HEK293 (cell line): ENCODE measurements at regions of chr11 and their contacts with region 1.

Region 1: GRCh38 chr11:18526521-18527296 is at the start of gene TSG101:
- H3K4me3 ChIP-seq: peak within 1 kb of the TSS; percentile 94
- H3K27ac ChIP-seq: peak within 1 kb of the TSS; percentile 76
- H3K4me1 ChIP-seq: peaks cover 2% of the 10 kb centered on the region; the same call in 1 of the 2 replicates
- CTCF ChIP-seq: no peak

Region 2: GRCh38 chr11:18634140-18635032 is 107.7 kb after region 1 on chr11 and contains the start of gene SPTY2D1:
- CTCF ChIA-PET with region 1: no interaction called
- POLR2A ChIA-PET with region 1: interaction called, 13 read pairs
- H3K4me3 ChIP-seq: peak within 1 kb of the TSS; percentile 91
- H3K27ac ChIP-seq: peak within 1 kb of the TSS; percentile 73
- H3K4me1 ChIP-seq: no peaks in the 10 kb centered on the region
- CTCF ChIP-seq: no peak